ENCODE measurements at regions of chr7 and their contacts with region 1.

Region 1: DNA sequence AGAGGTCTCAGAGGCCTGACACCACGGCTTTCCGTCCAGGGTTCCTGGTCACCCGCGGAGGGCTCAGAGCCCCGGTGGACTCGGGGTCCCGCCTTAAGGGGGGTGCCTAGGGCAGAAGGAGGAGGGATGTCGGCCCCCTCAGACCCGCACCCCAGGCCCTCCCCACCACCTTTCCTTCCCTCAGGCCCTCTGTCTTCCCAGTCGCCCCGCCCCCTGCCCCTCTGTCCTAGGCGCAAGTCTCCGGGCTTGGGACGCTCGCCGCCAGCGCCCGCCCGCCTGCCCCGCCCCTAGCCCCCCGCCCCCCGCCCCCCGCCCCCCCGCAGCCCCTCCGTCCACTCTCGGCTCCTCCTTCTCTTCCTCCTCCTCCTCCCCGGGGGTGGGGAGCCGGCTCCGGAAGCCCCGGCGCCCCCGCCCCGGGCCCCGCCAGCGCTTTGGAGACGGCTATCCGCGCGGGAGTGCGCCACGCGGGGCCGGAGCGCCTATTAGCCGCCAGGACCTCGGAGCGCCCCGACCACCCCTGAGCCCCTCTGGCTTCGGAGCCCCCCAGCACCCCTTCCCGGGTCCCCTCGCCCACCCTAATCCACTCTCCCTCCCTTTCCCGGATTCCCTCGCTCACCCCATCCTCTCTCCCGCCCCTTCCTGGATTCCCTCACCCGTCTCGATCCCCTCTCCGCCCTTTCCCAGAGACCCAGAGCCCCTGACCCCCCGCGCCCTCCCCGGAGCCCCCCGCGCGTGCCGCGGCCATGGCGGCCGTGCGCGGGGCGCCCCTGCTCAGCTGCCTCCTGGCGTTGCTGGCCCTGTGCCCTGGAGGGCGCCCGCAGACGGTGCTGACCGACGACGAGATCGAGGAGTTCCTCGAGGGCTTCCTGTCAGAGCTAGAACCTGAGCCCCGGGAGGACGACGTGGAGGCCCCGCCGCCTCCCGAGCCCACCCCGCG is at the start of gene AEBP1:
- DNase-seq: peak in 1 of 2 experiments; percentile 78
- H3K4me3 ChIP-seq: peak within 1 kb of the TSS; percentile 52 to 87 (median 64)
- H3K27ac ChIP-seq: no peak within 1 kb of the TSS
- H3K4me1 ChIP-seq: peaks cover 0 to 12% (median 9%) of the 10 kb centered on the region in 4 experiments; a peak in 6 of 7 replicates
- H3K27me3 ChIP-seq: peaks cover 0 to 29% (median 16%) of the 10 kb centered on the region in 4 experiments; a peak in 6 of 7 replicates
- CTCF ChIP-seq: peak in 2 of 3 experiments; percentile 13 to 19; a peak in 2 of 4 replicates
- EP300 ChIP-seq: no peak
- POLR2A ChIP-seq: no peak
- RAD21 ChIP-seq: no peak; a peak in 1 of 4 replicates
- total RNA-seq, gene AEBP1: 39.4 and 41.2 TPM in 2 replicates

Region 2: GRCh38 chr7:44087911-44088838 is 16.0 kb before region 1 on chr7:
- CTCF ChIA-PET with region 1: interaction called, 17 read pairs
- POLR2A ChIA-PET with region 1: no interaction called
- DNase-seq: no peak
- H3K4me3 ChIP-seq: no peak overlapping the region
- H3K27ac ChIP-seq: no peak overlapping the region
- H3K4me1 ChIP-seq: no peaks in the 10 kb centered on the region; a peak in 1 of 7 replicates
- H3K27me3 ChIP-seq: no peaks in the 10 kb centered on the region; a peak in 2 of 7 replicates
- CTCF ChIP-seq: no peak
- EP300 ChIP-seq: no peak
- POLR2A ChIP-seq: no peak
- RAD21 ChIP-seq: no peak

Region 3: GRCh38 chr7:44131173-44132029 is 27.2 kb after region 1 on chr7:
- CTCF ChIA-PET with region 1: no interaction called
- POLR2A ChIA-PET with region 1: no interaction called
- DNase-seq: no peak
- H3K4me3 ChIP-seq: no peak overlapping the region
- H3K27ac ChIP-seq: no peak overlapping the region
- H3K4me1 ChIP-seq: peaks cover 0 to 12% (median 3%) of the 10 kb centered on the region in 4 experiments; a peak in 4 of 7 replicates
- H3K27me3 ChIP-seq: peaks cover 0 to 16% (median 6%) of the 10 kb centered on the region in 4 experiments; a peak in 6 of 7 replicates
- CTCF ChIP-seq: peak; percentile 66 to 75 (median 68)
- EP300 ChIP-seq: no peak
- POLR2A ChIP-seq: no peak
- RAD21 ChIP-seq: peak; percentile 71 to 83

Measured in H1 (cell line).